ENCODE measurements at regions of chr2 and their contacts with region 1.

Region 1: DNA sequence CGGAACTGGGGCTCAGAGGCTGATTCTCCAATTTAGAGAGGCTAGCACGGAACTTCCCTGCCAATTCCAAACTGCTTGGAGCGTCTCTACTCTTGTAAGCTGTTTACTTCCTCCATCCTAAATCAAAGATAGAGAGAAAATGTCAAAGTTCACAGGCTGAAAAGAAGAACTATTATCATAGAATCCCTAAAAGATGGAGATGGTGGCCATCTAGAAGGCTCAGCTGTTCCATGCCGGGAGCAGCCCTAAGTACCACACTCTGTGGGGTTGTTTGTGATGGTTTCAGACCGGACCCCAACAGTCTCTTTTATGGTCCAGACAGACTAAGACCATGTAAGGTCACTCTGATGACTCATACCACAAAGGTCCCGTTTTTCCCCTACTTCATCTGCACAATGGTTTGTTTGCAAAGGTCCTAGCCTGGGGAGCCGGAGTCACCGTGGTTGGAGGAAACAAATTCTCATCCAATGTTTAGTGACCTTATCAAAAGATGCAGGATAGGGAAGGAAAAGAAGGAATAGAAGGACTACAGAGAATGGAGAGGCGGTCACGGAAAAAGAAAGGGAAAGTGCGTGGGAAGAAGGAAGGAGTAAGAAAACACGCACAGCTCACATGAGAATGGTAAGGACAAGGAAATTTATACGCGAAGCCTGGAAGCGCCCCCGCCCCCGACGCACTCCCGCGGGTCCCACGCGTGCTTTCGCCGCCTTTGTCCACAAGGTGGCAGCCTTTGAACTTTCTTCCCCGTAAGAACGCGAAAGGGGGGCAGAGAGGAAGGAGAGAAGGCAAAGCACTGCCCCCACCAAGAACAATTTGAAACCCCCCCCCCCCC is 453 bp upstream of the ANTXR1 start:
- DNase-seq: peak; percentile 44
- H3K4me3 Mint-ChIP-seq: peak overlapping the region; percentile 61
- H3K27ac Mint-ChIP-seq: no peak overlapping the region
- H3K4me1 Mint-ChIP-seq: peaks cover 14% of the 10 kb centered on the region
- H3K27me3 Mint-ChIP-seq: peaks cover 42% of the 10 kb centered on the region

Region 2: DNA sequence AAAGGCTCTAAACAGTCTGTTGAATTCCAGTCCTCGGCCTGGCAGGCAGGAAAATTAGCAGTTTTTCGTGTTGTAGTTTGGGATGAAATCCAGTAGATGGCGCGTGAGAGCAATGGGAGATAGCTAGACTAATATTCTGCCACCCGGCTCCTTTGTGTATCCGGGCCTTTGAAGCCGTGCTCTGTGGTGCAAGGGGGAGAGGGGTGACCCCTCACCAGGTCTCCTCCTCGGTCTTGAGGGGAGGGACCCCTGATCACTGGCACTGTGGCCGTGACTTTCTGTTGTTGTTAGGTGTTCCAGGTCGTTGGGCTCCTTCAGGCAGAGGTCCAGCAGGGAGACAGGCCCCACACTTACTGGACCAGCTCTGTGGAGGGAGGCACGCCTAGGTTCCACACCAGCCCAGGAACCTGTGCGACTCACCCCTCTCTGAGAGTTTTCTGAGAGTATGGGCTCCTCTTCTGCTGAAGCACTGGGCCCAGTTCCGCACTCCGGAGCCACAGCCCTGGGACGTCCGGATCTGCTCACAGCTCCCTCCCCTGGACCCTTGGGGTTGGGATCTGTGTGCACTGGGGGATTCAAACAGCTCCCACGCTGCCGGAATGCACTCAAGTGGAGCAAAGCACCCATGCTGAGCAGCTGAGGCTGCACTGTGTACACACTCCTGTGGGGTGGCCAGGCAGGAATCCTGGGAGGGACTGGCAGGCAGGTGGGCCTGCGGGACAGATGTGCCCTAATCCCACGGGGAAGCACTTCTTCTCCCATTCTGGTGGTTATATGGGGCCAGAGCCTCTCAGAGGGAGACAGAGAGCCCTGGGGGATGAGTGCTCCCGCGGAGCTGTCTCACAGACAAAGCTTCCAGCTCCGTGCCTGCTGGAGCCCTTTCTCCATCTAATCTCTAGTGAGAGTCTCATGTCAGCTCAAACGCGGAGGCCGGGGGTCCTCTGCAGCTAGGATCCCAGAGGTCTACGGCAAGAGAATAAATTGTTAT is 68.7 kb before region 1 on chr2:
- CTCF ChIA-PET with region 1: interaction called, 3 read pairs
- POLR2A ChIA-PET with region 1: no interaction called
- intact Hi-C with region 1: loop called (anchors 1 kb)
- DNase-seq: peak; percentile 58
- H3K4me3 Mint-ChIP-seq: no peak overlapping the region
- H3K27ac Mint-ChIP-seq: no peak overlapping the region
- H3K4me1 Mint-ChIP-seq: peaks cover 8% of the 10 kb centered on the region
- H3K27me3 Mint-ChIP-seq: peaks cover 32% of the 10 kb centered on the region

Region 3: DNA sequence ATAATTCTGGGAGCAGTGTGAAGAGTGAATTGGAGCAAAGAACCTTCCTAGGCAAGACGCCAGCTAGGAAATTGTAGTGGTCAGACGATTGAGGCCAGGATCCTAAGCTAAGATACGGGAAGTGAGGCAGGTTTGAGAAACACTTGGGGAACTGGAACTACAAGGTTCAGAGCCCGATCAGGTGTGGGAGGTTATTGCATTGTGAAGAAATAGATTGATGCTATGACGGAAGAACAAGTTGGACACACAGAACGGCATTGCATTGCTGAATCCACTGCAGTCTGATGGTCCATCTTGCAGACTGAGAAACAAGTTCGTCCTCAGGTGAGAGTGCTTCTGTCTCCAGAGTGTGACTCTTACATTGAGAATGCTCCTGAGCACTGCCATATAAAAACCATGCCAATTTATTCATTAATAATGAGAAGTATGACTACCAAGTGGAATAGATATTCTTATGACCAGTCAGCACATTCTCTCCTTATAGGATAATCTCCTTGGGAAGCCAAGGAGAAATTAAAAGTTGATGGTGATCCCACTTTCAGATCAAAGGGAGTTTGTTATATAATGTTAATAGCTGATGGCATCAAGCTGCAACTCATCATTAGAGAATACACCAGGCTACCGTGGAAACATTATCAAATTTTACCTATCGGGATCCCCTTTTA is 31.3 kb after region 1 on chr2:
- CTCF ChIA-PET with region 1: no interaction called
- POLR2A ChIA-PET with region 1: no interaction called
- intact Hi-C with region 1: no loop called
- DNase-seq: no peak
- H3K4me3 Mint-ChIP-seq: no peak overlapping the region
- H3K27ac Mint-ChIP-seq: no peak overlapping the region
- H3K4me1 Mint-ChIP-seq: no peaks in the 10 kb centered on the region
- H3K27me3 Mint-ChIP-seq: peaks cover 50% of the 10 kb centered on the region

Region 4: DNA sequence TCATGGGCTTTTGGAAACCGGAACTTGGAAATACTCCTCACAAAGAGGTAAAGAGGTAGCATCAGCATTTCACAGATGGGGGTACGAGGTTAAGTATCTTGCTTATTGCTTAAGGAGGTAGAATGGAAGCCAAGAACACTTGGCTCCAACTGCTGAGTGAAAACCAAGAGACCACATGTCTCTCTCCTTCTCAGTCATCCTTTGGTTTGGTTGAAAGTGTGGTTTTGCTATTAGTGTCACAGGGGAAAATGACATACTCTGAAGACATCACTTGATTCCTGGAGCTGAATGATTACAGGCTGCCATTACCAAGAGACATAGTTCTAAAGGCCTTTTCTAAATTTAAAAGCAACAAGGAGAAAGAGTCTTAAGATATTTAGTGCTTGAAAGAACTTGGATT is 41.9 kb after region 1 on chr2:
- CTCF ChIA-PET with region 1: no interaction called
- POLR2A ChIA-PET with region 1: no interaction called
- intact Hi-C with region 1: loop called (anchors 1 kb)
- DNase-seq: peak; percentile 11
- H3K4me3 Mint-ChIP-seq: no peak overlapping the region
- H3K27ac Mint-ChIP-seq: no peak overlapping the region
- H3K4me1 Mint-ChIP-seq: peaks cover 12% of the 10 kb centered on the region
- H3K27me3 Mint-ChIP-seq: peaks cover 46% of the 10 kb centered on the region